ENCODE measurements at regions of chr13 and their contacts with region 1.

Region 1: DNA sequence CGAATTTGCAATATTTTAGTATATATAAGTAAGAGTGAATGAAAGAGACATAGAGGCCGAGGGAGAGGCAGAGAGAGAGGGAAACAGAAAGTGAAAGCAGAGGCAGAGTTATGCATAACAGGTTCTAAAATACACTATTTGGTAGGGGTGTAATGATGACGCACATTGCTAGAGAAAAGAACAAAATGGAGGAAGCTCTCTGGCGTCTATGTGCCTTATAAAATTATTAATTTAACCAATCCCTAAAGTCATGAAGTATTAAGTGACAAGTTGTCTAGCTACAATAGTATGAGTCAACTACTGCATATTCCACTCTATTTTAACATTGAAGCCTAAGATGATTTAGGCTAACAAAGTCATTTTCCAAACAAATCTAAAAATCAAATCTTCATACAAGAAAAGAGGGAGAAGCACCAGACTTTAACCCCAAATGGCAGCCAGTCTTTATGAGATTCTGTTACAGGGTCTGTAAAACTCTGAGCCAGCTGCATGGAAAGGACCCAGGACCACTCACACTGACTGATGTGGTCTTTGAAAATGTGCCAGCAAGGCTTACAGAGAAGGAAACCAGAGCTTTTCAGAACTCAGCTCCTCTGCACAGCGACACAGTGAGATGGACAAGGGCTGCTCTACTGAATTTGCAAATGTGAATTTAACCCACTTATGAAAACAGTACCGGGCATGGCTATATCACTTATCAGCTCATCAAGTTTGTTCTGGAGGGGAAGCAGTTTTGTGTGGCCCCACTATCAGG is 99.0 kb upstream of the SERP2 start:
- DNase-seq: peak; percentile 79
- H3K4me3 ChIP-seq: peak overlapping the region; percentile 57
- H3K27ac ChIP-seq: peak overlapping the region; percentile 97
- H3K4me1 ChIP-seq: peaks cover 87% of the 10 kb centered on the region
- CTCF ChIP-seq: no peak

Region 2: GRCh38 chr13:44141725-44142539 is 132.7 kb before region 1 on chr13:
- CTCF ChIA-PET with region 1: no interaction called
- POLR2A ChIA-PET with region 1: no interaction called
- intact Hi-C with region 1: loop called (anchors 5 kb)
- DNase-seq: peak; percentile 94
- H3K4me3 ChIP-seq: peak overlapping the region; percentile 78
- H3K27ac ChIP-seq: no peak overlapping the region
- H3K4me1 ChIP-seq: peaks cover 36% of the 10 kb centered on the region
- CTCF ChIP-seq: no peak

Region 3: GRCh38 chr13:44243198-44243857 is 31.3 kb before region 1 on chr13:
- CTCF ChIA-PET with region 1: no interaction called
- POLR2A ChIA-PET with region 1: interaction called, 6 read pairs
- intact Hi-C with region 1: loop called (anchors 1 kb)
- DNase-seq: peak; percentile 84
- H3K4me3 ChIP-seq: no peak overlapping the region
- H3K27ac ChIP-seq: peak overlapping the region; percentile 51
- H3K4me1 ChIP-seq: peaks cover 38% of the 10 kb centered on the region
- CTCF ChIP-seq: peak; percentile 79

Region 4: GRCh38 chr13:44259045-44260027 is 15.3 kb before region 1 on chr13:
- CTCF ChIA-PET with region 1: interaction called, 3 read pairs
- POLR2A ChIA-PET with region 1: interaction called, 14 read pairs
- intact Hi-C with region 1: no loop called
- DNase-seq: peak; percentile 67
- H3K4me3 ChIP-seq: peak overlapping the region; percentile 48
- H3K27ac ChIP-seq: peak overlapping the region; percentile 70
- H3K4me1 ChIP-seq: peaks cover 26% of the 10 kb centered on the region
- CTCF ChIP-seq: no peak